Psoas muscle (tissue), 8 donors: ENCODE measurements at regions of chr17 and their contacts with region 1.

Region 1: DNA sequence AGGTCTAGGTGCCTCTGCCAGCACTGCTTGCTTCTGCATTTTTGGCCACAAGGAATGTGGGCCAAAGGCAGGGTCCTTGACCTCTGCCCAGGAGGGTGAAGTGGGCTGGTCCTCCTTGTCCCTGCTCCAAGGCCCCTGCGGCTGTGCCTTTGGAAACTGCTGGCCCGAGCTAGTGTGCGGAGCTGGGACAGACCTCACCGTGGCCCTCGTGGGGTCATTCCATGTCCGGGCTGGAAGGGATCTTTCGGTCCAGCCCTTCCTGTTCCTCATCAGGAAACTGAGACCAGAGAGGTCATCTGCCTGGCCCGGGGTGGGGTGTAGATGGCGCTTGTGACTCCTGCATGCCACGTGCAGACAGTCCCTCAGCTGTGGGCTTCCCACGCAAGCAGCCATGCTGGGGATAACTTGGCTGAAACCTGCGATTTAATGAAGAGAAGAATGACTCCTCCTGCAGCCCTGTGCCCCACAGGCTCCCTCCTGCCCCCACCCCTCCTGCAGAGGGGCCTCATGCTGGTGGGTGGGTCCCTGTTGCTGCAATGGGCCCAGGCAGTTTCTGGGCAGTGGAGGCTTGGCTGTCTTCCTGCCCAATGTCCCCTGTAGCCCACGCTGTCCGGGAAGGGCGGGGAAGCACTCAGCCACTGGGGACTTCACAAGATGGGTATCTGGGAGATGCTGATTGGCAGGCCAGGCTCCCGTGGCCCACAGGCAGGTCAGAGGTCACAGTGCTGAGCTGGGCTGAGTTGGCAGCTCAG is 245.2 kb downstream of the SEC14L1 start:
- DNase-seq: peak; percentile 57 to 73
- ATAC-seq: peak in 1 of 4 donors; percentile 10
- H3K4me3 ChIP-seq: peak overlapping the region; percentile 4
- H3K27ac ChIP-seq: peak overlapping the region; percentile 68
- H3K4me1 ChIP-seq: peaks cover 80% of the 10 kb centered on the region
- H3K27me3 ChIP-seq: no peaks in the 10 kb centered on the region
- CTCF ChIP-seq: no peak

Region 2: DNA sequence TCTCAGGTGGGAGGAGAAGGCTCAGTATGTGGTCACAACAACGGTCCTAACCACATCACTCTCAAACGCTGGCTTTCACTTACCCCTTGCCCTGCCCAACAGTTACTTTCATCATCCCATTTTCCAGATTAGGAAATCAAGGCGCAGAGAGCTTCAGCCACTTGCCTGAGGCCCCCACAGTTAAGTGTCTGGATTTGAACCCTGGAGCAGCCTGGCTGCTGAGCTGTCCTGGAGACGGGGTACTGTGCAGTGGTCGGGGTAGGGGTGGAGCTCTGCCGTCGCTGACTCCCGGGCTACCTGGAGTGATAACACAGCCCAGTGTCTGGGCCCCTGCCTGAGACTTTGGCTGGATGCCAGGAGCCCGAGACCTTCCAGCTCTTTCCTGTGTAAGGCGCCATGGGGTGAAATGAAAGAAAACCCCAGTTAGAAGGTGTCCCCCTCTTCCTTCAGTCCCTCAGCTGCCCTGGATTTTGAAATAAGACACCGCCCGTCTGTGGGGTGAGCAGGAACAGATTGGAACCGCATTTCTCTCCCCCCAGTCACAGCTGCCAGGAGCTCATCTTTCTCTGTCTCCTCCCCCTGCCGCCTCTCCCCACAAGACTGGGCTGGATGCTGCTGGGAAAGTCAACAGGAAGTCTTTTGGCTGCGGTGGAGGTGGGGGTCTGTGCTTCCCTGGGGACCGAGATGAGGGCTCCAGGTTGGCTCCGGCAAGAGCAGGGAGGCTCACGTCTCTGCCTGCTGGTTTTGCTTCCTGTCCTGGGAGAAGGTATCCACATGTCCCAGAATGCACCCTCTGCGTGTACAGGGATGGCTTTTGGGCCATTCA is 35.1 kb after region 1 on chr17:
- intact Hi-C with region 1: loop called in 1 of 2 experiments (anchors 5 kb)
- DNase-seq: peak in 1 of 2 donors; percentile 18
- ATAC-seq: peak; percentile 23 to 46 (median 36)
- H3K4me3 ChIP-seq: peak overlapping the region; percentile 19
- H3K27ac ChIP-seq: peak overlapping the region; percentile 83
- H3K4me1 ChIP-seq: peaks cover 64% of the 10 kb centered on the region
- H3K27me3 ChIP-seq: no peaks in the 10 kb centered on the region
- CTCF ChIP-seq: no peak